MCF 10A (cell line): ENCODE measurements at regions of chr2 and their contacts with region 1.

Region 1: DNA sequence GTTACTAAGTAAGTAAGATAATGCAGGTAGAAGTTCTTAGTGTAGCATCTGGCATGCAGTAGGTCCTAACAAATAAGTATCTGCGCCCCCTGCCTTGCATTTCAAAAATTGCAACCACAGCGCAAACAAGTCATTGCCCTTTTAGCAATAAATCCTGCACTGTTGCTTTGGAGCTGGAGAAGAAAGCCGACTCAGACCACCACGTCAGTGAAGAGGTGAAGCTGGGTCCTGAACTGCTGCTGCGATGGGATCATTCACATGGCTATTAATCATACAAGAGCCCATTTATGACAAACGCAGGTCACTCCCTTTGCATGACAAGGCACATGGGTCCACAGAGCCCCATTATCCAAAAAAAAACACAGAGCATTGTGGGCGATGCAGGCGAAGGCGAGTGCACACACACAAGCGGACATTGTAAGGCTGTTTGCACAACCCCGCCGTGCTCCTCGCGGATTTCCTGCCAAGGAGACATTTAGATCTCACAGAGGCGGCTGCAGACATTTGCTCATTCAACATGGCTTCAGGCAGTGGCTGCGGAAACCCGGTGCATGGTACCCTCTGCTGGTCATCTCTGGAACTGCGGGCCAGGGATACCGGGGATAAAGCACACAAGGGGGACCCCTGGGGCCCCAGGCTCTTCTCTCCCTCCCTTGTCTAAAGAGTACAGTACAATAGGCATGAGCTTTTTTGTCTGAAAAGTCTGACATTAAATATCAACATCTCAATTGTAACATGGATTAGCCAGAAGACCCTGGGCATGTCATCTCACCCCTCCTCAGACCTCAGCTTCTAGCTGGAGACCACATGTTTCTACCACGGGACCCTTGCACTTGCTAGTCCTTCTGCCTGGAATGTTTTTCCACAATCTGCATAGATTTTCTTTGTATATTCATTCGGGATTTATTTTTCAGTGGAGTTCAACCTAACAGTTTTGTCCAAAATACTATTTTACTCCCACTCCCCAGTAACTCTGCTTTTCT is 56.7 kb downstream of the CYRIA start:
- DNase-seq: peak; percentile 76
- H3K4me3 Mint-ChIP-seq: peak overlapping the region; percentile 73
- H3K27ac Mint-ChIP-seq: no peak overlapping the region
- H3K4me1 Mint-ChIP-seq: no peaks in the 10 kb centered on the region
- H3K27me3 Mint-ChIP-seq: peaks cover 5% of the 10 kb centered on the region
- CTCF ChIP-seq: peak; percentile 95

Region 2: GRCh38 chr2:15642011-15642814 is 966.7 kb before region 1 on chr2:
- CTCF ChIA-PET with region 1: interaction called, 14 read pairs
- POLR2A ChIA-PET with region 1: interaction called, 4 read pairs
- intact Hi-C with region 1: no loop called
- DNase-seq: no peak
- H3K4me3 Mint-ChIP-seq: no peak overlapping the region
- H3K27ac Mint-ChIP-seq: no peak overlapping the region
- H3K4me1 Mint-ChIP-seq: peaks cover 6% of the 10 kb centered on the region
- H3K27me3 Mint-ChIP-seq: no peaks in the 10 kb centered on the region
- CTCF ChIP-seq: no peak

Region 3: DNA sequence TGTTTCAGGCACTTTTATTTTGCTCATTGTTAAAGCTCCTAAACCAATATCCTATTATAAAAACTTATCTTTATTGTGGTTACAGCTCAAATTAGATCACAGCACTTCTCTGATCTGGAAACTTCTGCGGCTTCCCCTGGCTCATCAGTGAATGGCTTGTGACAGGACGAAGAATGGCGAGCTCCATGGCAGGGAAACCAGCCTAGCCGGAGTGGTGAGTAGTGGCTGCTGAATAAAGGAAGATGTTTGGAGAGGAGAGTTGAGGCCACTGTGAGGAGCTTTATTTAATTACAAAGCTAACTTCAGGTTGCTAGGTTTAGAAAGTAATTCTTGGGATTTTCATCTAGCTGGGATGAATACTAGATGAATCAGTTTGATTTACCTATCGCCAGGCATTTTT is 156.8 kb before region 1 on chr2:
- CTCF ChIA-PET with region 1: no interaction called
- POLR2A ChIA-PET with region 1: no interaction called
- intact Hi-C with region 1: no loop called
- DNase-seq: no peak
- H3K4me3 Mint-ChIP-seq: no peak overlapping the region
- H3K27ac Mint-ChIP-seq: no peak overlapping the region
- H3K4me1 Mint-ChIP-seq: no peaks in the 10 kb centered on the region
- H3K27me3 Mint-ChIP-seq: peaks cover 28% of the 10 kb centered on the region
- CTCF ChIP-seq: no peak

Region 4: GRCh38 chr2:16525265-16525887 is 83.6 kb before region 1 on chr2:
- CTCF ChIA-PET with region 1: interaction called, 11 read pairs
- POLR2A ChIA-PET with region 1: no interaction called
- intact Hi-C with region 1: loop called (anchors 1 kb)
- DNase-seq: peak; percentile 63
- H3K4me3 Mint-ChIP-seq: no peak overlapping the region
- H3K27ac Mint-ChIP-seq: no peak overlapping the region
- H3K4me1 Mint-ChIP-seq: no peaks in the 10 kb centered on the region
- H3K27me3 Mint-ChIP-seq: peaks cover 2% of the 10 kb centered on the region
- CTCF ChIP-seq: peak; percentile 54

Region 5: GRCh38 chr2:16561676-16562075 is 47.3 kb before region 1 on chr2:
- CTCF ChIA-PET with region 1: no interaction called
- POLR2A ChIA-PET with region 1: no interaction called
- intact Hi-C with region 1: no loop called
- DNase-seq: no peak
- H3K4me3 Mint-ChIP-seq: no peak overlapping the region
- H3K27ac Mint-ChIP-seq: no peak overlapping the region
- H3K4me1 Mint-ChIP-seq: no peaks in the 10 kb centered on the region
- H3K27me3 Mint-ChIP-seq: no peaks in the 10 kb centered on the region
- CTCF ChIP-seq: no peak

Region 6: DNA sequence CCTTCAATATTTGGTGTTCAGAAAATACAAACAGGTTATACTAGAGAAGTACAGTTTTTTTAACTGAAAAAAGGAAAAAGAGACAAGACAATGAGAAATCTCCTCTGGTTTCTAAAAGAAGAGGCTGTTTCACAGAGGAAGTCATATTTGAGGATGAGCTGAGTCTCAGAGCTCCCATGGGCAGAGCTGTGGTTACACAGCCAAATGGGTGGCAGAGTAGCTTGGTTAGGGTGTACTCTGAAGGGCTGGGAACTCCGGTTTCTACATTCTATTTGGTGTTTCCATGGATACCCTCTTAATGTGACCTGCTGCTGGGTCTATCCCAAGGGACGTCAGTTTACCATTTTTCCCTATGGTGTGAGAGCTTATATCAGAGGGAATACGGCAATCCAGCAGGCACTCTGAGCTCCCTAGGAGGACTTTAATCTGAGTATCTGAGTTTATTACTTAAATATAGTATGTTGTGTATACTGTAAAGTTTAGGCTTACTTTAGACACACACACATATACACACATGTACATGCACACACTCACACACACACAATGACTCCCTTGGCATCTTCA is 17.5 kb before region 1 on chr2:
- CTCF ChIA-PET with region 1: interaction called, 11 read pairs
- POLR2A ChIA-PET with region 1: no interaction called
- intact Hi-C with region 1: no loop called
- DNase-seq: no peak
- H3K4me3 Mint-ChIP-seq: no peak overlapping the region
- H3K27ac Mint-ChIP-seq: no peak overlapping the region
- H3K4me1 Mint-ChIP-seq: no peaks in the 10 kb centered on the region
- H3K27me3 Mint-ChIP-seq: no peaks in the 10 kb centered on the region
- CTCF ChIP-seq: no peak

Region 7: DNA sequence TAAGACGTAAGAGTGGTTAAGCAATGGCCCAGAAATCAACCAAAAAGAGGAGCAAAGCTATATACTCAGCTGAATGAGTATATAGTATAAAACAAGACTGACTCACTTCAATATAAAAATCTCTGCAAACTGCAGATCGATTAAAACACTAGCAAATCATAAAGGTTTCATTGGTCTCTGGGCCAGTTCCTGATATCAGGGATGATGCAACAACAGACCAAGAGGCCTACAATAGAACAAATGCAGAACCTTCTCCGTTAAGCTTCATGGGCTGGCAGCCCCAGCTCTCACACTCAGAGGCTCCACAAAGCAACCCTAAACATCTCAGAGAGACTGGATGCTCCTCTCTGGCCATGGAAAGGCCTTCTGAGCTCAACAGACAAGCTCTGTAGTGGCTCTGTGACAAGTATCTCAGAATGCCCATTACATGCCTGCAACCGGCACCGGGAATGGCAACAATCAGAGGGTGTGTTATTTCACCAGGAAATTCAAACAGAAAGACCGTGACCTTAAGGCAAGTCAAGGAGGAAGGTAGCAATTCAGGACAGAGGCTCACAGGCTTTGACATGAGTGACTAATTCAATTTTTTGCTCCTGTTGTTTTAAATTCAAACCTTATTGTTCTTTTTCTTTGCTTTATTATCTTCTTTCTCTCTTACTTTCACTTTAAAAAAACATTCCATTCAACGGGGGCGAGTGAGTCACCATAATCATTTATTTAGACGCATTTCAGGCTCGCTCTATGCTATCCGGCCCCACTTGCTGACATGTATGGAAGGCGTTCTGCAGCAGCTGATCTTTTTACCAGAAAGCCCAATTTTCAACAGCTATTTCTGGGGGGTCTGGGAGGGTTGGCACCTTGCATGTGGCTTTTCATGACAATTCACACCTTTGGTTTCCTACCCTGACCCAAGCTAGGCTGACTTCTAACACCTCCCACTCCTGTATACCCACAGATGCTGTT is 41.6 kb after region 1 on chr2:
- CTCF ChIA-PET with region 1: interaction called, 11 read pairs
- POLR2A ChIA-PET with region 1: no interaction called
- intact Hi-C with region 1: no loop called
- DNase-seq: peak; percentile 61
- H3K4me3 Mint-ChIP-seq: peak overlapping the region; percentile 30
- H3K27ac Mint-ChIP-seq: peak overlapping the region; percentile 76
- H3K4me1 Mint-ChIP-seq: peaks cover 31% of the 10 kb centered on the region
- H3K27me3 Mint-ChIP-seq: no peaks in the 10 kb centered on the region
- CTCF ChIP-seq: no peak

Region 8: GRCh38 chr2:16700551-16701259 is 91.8 kb after region 1 on chr2:
- CTCF ChIA-PET with region 1: no interaction called
- POLR2A ChIA-PET with region 1: no interaction called
- intact Hi-C with region 1: no loop called
- DNase-seq: no peak
- H3K4me3 Mint-ChIP-seq: no peak overlapping the region
- H3K27ac Mint-ChIP-seq: no peak overlapping the region
- H3K4me1 Mint-ChIP-seq: no peaks in the 10 kb centered on the region
- H3K27me3 Mint-ChIP-seq: peaks cover 9% of the 10 kb centered on the region
- CTCF ChIP-seq: no peak

Region 9: GRCh38 chr2:16798472-16798871 is 189.5 kb after region 1 on chr2:
- CTCF ChIA-PET with region 1: no interaction called
- POLR2A ChIA-PET with region 1: no interaction called
- intact Hi-C with region 1: no loop called
- DNase-seq: no peak
- H3K4me3 Mint-ChIP-seq: no peak overlapping the region
- H3K27ac Mint-ChIP-seq: no peak overlapping the region
- H3K4me1 Mint-ChIP-seq: no peaks in the 10 kb centered on the region
- H3K27me3 Mint-ChIP-seq: no peaks in the 10 kb centered on the region
- CTCF ChIP-seq: no peak